Left cardiac atrium (tissue), 4 donors: ENCODE measurements at regions of chr2 and their contacts with region 1.

Region 1: GRCh38 chr2:100984892-100985379 is 17.2 kb upstream of the RPL31 start:
- DNase-seq: peak; percentile 86
- ATAC-seq: peak; percentile 75 to 76

Region 2: GRCh38 chr2:100730346-100730745 is 254.6 kb before region 1 on chr2:
- intact Hi-C with region 1: loop called (anchors 5 kb)
- DNase-seq: peak; percentile 65
- ATAC-seq: peak; percentile 83 to 85